ENCODE measurements at regions of chr3 and their contacts with region 1.

Region 1: DNA sequence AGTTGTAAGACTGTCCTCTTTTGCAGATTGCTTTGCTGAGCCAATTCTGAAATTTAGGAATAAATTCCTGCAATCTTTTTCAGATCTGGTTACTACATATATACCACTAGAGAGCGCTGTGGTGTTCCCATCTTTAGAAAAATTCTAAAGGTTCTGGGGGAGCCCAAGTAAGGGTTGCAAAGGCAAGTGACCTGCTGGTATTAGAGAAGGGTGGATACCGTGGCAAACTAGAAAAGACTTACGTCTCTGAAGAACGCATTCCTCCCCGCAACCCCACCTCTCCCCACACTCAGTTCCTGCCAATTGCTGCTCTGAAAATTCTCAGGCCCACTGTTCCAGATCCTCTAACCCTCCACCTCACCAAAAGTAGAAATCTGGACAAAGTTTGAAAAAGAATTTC is 48.5 kb downstream of the EFHB start:
- DNase-seq: no peak
- ATAC-seq: no peak
- H3K4me3 ChIP-seq: no peak overlapping the region
- H3K27ac ChIP-seq: no peak overlapping the region
- H3K4me1 ChIP-seq: peaks cover 0 to 2% of the 10 kb centered on the region in 2 donors
- H3K27me3 ChIP-seq: no peaks in the 10 kb centered on the region

Region 2: DNA sequence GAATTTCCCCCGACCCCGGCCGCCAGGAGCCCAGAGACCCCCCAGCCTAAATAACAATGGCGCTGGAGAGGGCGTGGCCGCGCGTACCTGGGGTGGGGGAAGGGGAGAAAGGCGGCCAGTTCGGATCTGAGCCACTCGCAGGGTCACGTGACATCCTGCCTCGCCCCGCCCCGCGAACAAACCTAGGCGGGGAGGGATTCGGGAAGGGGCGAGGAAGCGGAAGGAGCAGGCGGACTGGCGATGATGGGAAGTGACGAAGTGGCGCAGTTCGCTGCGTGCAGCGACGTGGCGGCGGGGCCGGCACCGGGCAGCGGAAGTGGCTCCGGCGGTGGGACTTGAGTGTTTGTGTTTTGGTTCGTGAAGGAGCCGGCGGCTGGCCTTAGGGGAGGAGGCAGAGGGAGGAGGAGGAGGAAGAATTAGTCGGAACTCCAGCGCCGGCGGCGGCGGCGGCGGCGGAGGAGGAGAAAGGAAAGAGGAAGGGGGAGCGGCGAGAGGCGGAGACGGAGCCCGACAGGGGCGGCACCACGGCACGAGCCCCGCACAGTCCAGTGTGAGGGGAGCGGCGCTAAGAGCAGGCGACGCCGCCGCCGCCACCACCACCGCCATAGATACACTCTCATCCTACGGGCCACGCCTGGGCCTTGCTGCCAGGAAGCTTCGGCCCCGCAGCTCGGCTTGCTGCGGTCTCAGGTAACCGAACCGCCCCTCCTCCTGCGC is 61.5 kb after region 1 on chr3 and contains the start of gene RAB5A:
- intact Hi-C with region 1: loop called in 1 of 2 experiments (anchors 2 kb)
- DNase-seq: peak; percentile 99
- ATAC-seq: peak; percentile 98
- H3K4me3 ChIP-seq: peak within 1 kb of the TSS; percentile 78 to 98
- H3K27ac ChIP-seq: peak within 1 kb of the TSS; percentile 83 to 98
- H3K4me1 ChIP-seq: peaks cover 2 to 4% of the 10 kb centered on the region in 2 donors
- H3K27me3 ChIP-seq: no peaks in the 10 kb centered on the region
- total RNA-seq, gene RAB5A: 75.9 to 80.3 TPM

Measured in aorta (tissue), 5 donors.